Aorta (tissue), 5 donors: ENCODE measurements at regions of chr21 and their contacts with region 1.

Region 1: GRCh38 chr21:42117229-42117966 is 46.3 kb downstream of the UMODL1 start:
- DNase-seq: peak; percentile 80 to 92
- ATAC-seq: peak; percentile 87
- H3K4me3 ChIP-seq: no peak overlapping the region
- H3K27ac ChIP-seq: no peak overlapping the region
- H3K4me1 ChIP-seq: no peaks in the 10 kb centered on the region
- H3K27me3 ChIP-seq: no peaks in the 10 kb centered on the region

Region 2: GRCh38 chr21:41816220-41817165 is 300.9 kb before region 1 on chr21:
- intact Hi-C with region 1: loop called (anchors 5 kb)
- DNase-seq: peak; percentile 74 to 85
- ATAC-seq: peak; percentile 85
- H3K4me3 ChIP-seq: no peak overlapping the region
- H3K27ac ChIP-seq: no peak overlapping the region
- H3K4me1 ChIP-seq: no peaks in the 10 kb centered on the region
- H3K27me3 ChIP-seq: no peaks in the 10 kb centered on the region

Region 3: GRCh38 chr21:41879190-41879998 is 238.0 kb before region 1 on chr21 and contains the start of gene PRDM15:
- intact Hi-C with region 1: loop called in 1 of 2 experiments (anchors 10 kb)
- DNase-seq: peak; percentile 89 to 94
- ATAC-seq: peak; percentile 75
- H3K4me3 ChIP-seq: peak within 1 kb of the TSS; percentile 59 to 83
- H3K27ac ChIP-seq: peak within 1 kb of the TSS; percentile 45 to 46
- H3K4me1 ChIP-seq: no peaks in the 10 kb centered on the region
- H3K27me3 ChIP-seq: no peaks in the 10 kb centered on the region
- total RNA-seq, gene PRDM15: 9.0 to 11.5 TPM